ENCODE measurements at regions of chr7 and their contacts with region 1.

Region 1: DNA sequence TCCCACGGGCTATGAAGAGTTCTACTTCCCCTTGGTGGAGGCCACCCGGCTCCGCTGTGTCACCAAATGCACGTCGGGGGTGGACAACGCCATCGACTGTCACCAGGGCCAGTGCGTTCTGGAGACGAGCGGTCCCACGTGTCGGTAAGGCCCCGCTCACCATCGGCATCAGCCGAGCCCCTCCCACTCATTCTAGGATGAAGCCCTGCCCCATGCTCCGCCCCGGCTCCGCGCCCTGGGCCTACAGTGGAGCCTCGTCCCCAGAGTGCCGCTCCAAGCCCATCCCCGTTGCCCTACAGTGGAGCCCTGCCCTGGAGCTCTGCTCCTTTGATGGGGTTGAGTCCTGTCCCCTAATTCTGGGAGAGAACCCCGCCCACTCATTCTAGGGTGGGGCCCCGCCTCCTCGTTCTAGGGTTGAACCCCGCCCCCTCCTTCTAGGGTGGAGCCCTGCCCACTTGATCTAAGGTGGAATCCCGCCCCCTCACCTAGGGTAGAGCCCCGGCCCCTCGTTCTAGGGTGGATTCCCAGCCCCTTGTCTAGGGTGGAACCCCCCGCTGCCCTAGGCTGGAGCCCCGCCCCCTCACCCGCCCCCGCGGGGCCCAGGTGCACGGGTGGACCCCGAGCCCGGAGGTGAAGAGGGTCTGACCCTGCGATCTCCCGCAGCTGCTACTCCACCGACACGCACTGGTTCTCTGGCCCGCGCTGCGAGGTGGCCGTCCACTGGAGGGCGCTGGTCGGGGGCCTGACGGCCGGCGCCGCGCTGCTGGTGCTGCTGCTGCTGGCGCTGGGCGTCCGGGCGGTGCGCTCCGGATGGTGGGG is 3.4 kb upstream of the MUC12 start:
- DNase-seq: peak; percentile 33 to 52 (median 38)
- H3K4me3 ChIP-seq: peak overlapping the region in 1 of 3 experiments; percentile 52
- H3K4me3 Mint-ChIP-seq: peak overlapping the region; percentile 52 to 88
- H3K27ac ChIP-seq: no peak overlapping the region
- H3K27ac Mint-ChIP-seq: no peak overlapping the region
- H3K4me1 ChIP-seq: peaks cover 7 to 12% of the 10 kb centered on the region in 2 donors
- H3K4me1 Mint-ChIP-seq: peaks cover 10% of the 10 kb centered on the region
- H3K27me3 ChIP-seq: peaks cover 21 to 46% of the 10 kb centered on the region in 2 donors
- H3K27me3 Mint-ChIP-seq: peaks cover 56 to 65% (median 57%) of the 10 kb centered on the region in 3 donors
- CTCF ChIP-seq: peak; percentile 79

Region 2: GRCh38 chr7:100773491-100773890 is 192.4 kb before region 1 on chr7:
- intact Hi-C with region 1: loop called in 1 of 2 experiments (anchors 5 kb)
- DNase-seq: no peak
- H3K4me3 ChIP-seq: no peak overlapping the region
- H3K4me3 Mint-ChIP-seq: no peak overlapping the region
- H3K27ac ChIP-seq: no peak overlapping the region
- H3K27ac Mint-ChIP-seq: no peak overlapping the region
- H3K4me1 ChIP-seq: no peaks in the 10 kb centered on the region
- H3K4me1 Mint-ChIP-seq: no peaks in the 10 kb centered on the region
- H3K27me3 ChIP-seq: no peaks in the 10 kb centered on the region
- H3K27me3 Mint-ChIP-seq: peaks cover 12 to 13% (median 13%) of the 10 kb centered on the region in 3 donors
- CTCF ChIP-seq: no peak

Region 3: DNA sequence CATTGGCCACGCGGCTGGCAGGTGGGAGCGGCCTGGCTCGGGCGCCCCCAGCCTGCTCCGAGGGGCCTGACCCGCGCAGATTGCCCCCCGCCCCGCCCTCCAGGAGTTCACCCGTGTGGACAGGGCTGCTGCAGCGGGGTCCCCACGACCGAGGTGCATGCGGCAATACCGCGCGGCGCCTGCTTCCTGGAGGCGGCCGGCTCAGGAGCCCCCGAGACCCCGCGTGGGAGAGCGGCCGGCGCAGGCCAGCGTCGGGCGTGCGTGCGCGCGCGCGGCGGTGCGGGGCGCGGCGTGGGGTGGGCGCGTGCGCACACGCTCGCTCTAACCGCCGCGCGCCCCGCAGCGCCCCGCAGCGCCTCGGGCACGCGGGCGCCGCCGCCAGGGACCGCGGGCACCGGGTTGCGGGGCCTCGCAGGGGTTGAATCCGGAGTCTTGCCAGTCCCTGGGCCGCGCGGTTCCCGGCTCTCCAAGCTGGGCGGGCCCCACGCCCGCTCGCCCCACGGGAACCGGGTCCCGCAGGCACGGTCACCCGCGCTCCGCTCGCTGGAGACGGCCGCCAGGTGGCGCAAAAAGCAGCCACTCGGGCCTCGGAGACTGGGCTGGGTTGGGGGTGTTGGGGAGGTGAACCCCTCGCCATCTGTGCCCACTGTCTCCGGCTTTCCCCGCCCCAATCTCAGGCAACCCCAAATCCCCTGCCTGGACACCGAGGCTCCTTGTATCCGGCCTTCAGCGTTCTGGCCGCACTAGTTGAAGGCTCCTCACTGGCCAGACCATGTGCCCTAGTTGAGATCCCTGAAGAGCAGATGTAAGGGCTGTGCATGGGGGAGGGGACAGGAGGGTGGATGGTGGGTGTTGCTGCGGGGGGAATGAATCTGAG is 69.0 kb before region 1 on chr7:
- intact Hi-C with region 1: loop called in 1 of 2 experiments (anchors 1 kb)
- DNase-seq: peak in 2 of 3 donors; percentile 34 to 67
- H3K4me3 ChIP-seq: peak overlapping the region in 2 of 3 experiments; percentile 2 to 68
- H3K4me3 Mint-ChIP-seq: peak overlapping the region; percentile 71 to 94
- H3K27ac ChIP-seq: no peak overlapping the region
- H3K27ac Mint-ChIP-seq: peak overlapping the region in 1 of 7 donors; percentile 84
- H3K4me1 ChIP-seq: peaks cover 14 to 20% of the 10 kb centered on the region in 2 donors
- H3K4me1 Mint-ChIP-seq: peaks cover 9% of the 10 kb centered on the region
- H3K27me3 ChIP-seq: peaks cover 14 to 69% of the 10 kb centered on the region in 2 donors
- H3K27me3 Mint-ChIP-seq: peaks cover 56 to 84% (median 65%) of the 10 kb centered on the region in 3 donors
- CTCF ChIP-seq: peak; percentile 84

Region 4: DNA sequence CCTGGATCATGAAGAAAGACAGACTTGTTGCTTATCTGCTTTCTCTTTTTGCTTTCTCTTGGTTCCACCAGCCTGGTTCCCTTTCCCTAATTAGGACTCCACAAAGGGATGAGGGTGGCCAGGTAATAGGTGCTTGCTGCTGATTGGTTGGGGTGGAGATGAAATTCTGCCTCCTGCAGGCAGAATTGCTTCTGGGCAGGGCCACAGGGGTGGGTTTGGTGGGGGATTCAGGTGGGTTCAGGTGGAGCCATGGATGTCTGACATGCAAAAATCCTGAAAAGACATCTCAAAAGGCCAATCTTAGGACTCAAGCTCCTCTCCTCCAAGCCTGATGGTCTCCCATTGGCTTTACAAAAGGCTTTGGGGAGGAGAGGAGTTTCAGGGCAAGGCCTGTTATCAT is 44.9 kb before region 1 on chr7:
- intact Hi-C with region 1: no loop called
- DNase-seq: no peak
- H3K4me3 ChIP-seq: no peak overlapping the region
- H3K4me3 Mint-ChIP-seq: no peak overlapping the region
- H3K27ac ChIP-seq: no peak overlapping the region
- H3K27ac Mint-ChIP-seq: no peak overlapping the region
- H3K4me1 ChIP-seq: peaks cover 4 to 5% of the 10 kb centered on the region in 2 donors
- H3K4me1 Mint-ChIP-seq: peaks cover 10% of the 10 kb centered on the region
- H3K27me3 ChIP-seq: no peaks in the 10 kb centered on the region
- H3K27me3 Mint-ChIP-seq: peaks cover 9 to 31% (median 30%) of the 10 kb centered on the region in 3 donors
- CTCF ChIP-seq: no peak

Region 5: GRCh38 chr7:100942045-100942768 is 23.7 kb before region 1 on chr7:
- intact Hi-C with region 1: no loop called
- DNase-seq: no peak
- H3K4me3 ChIP-seq: no peak overlapping the region
- H3K4me3 Mint-ChIP-seq: peak overlapping the region in 1 of 2 donors; percentile 7
- H3K27ac ChIP-seq: no peak overlapping the region
- H3K27ac Mint-ChIP-seq: no peak overlapping the region
- H3K4me1 ChIP-seq: no peaks in the 10 kb centered on the region
- H3K4me1 Mint-ChIP-seq: no peaks in the 10 kb centered on the region
- H3K27me3 ChIP-seq: no peaks in the 10 kb centered on the region
- H3K27me3 Mint-ChIP-seq: peaks cover 12 to 19% (median 13%) of the 10 kb centered on the region in 3 donors
- CTCF ChIP-seq: no peak

Region 6: DNA sequence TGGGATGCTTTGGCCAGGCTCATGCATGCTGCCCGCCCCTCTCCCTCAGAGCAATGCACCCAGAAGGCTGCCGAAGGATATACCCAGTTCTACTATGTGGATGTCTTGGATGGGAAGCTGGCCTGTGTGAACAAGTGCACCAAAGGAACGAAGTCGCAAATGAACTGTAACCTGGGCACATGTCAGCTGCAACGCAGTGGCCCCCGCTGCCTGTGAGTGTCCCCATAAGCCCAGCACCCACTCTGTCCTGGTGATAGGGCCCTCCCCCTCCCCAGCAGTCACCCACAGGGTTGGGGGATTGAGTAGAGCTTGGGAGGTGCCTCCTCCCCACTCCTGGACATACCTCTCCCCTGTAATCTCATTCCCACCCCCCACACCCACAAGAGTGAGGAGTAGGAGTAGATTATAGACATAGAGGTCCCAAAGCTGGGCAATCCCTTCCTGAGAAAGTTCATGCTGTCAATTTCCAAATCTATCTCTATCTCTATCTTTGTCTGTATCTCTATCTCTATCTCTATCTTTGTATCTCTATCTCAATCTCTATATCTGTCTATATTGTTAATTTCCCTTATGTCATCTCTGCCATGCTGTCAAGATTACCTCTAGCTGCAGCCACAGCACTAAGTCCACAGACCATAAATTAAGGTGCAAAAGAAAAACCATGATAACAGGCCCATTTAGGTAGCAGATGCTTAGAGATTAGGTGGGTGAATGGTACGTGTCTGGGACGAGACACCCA is 47.2 kb after region 1 on chr7:
- intact Hi-C with region 1: no loop called
- DNase-seq: no peak
- H3K4me3 ChIP-seq: no peak overlapping the region
- H3K4me3 Mint-ChIP-seq: no peak overlapping the region
- H3K27ac ChIP-seq: no peak overlapping the region
- H3K27ac Mint-ChIP-seq: no peak overlapping the region
- H3K4me1 ChIP-seq: peaks cover 10 to 13% of the 10 kb centered on the region in 2 donors
- H3K4me1 Mint-ChIP-seq: peaks cover 9% of the 10 kb centered on the region
- H3K27me3 ChIP-seq: peaks cover 0 to 18% of the 10 kb centered on the region in 2 donors
- H3K27me3 Mint-ChIP-seq: peaks cover 19 to 36% (median 26%) of the 10 kb centered on the region in 3 donors
- CTCF ChIP-seq: no peak

Region 7: DNA sequence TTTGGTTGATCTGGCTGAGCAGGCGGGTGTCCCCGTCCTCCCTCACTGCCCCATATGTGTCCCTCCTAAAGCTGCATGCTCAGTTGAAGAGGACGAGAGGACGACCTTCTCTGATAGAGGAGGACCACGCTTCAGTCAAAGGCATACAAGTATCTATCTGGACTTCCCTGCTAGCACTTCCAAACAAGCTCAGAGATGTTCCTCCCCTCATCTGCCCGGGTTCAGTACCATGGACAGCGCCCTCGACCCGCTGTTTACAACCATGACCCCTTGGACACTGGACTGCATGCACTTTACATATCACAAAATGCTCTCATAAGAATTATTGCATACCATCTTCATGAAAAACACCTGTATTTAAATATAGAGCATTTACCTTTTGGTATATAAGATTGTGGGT is 92.4 kb after region 1 on chr7:
- intact Hi-C with region 1: loop called (anchors 2 to 5 kb)
- DNase-seq: peak; percentile 12 to 31 (median 14)
- H3K4me3 ChIP-seq: no peak overlapping the region
- H3K4me3 Mint-ChIP-seq: no peak overlapping the region
- H3K27ac ChIP-seq: no peak overlapping the region
- H3K27ac Mint-ChIP-seq: no peak overlapping the region
- H3K4me1 ChIP-seq: no peaks in the 10 kb centered on the region
- H3K4me1 Mint-ChIP-seq: no peaks in the 10 kb centered on the region
- H3K27me3 ChIP-seq: peaks cover 2 to 7% of the 10 kb centered on the region in 2 donors
- H3K27me3 Mint-ChIP-seq: peaks cover 27 to 30% (median 29%) of the 10 kb centered on the region in 3 donors
- CTCF ChIP-seq: no peak

Measured in CD14-positive monocyte (primary cell).